ENCODE measurements at regions of chr11 and their contacts with region 1.

Region 1: GRCh38 chr11:65471410-65471762 is 27.5 kb upstream of the MALAT1 start:
- DNase-seq: no peak
- H3K4me3 ChIP-seq: peak overlapping the region; percentile 31
- H3K27ac ChIP-seq: peak overlapping the region; percentile 97
- H3K27me3 ChIP-seq: no peaks in the 10 kb centered on the region
- CTCF ChIP-seq: peak; percentile 56

Region 2: DNA sequence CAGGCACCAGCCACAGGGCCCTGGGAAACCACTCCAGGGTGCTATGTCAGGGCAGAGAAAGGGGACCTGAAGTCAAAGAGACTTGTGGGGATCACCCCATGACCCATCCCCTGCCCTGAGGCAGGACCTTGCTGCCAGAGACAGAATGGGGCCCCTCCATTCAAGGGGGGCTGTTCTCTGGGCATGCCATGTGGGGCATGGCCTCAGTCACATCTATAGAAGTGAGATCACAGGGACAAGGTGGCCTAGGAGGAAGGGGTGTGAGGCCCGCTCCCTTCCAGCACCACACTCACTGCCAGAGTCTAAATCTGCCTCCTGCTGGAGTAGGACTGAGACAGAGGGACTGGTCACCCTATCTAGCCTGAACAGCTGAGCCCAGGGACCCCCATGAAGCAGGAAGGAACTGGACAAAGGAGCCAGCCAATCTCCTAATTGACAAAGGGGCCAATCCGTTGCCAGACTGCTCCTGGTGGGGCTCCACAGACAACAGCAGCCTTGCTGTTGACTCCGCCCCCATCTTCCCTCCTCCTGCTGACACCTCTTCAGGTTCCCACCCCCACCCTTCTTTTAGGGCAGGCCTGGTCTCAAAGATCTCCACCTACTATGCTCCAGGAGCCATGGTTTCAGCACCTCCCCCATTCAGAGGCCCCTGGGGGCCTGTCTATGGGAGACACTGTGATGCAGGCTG is 22.8 kb before region 1 on chr11:
- CTCF ChIA-PET with region 1: no interaction called
- POLR2A ChIA-PET with region 1: interaction called, 17 read pairs
- DNase-seq: no peak
- H3K4me3 ChIP-seq: no peak overlapping the region
- H3K27ac ChIP-seq: peak overlapping the region; percentile 61
- H3K27me3 ChIP-seq: no peaks in the 10 kb centered on the region
- CTCF ChIP-seq: no peak

Measured in AG04450 (cell line).